ENCODE measurements at regions of chr5 and their contacts with region 1.

Region 1: DNA sequence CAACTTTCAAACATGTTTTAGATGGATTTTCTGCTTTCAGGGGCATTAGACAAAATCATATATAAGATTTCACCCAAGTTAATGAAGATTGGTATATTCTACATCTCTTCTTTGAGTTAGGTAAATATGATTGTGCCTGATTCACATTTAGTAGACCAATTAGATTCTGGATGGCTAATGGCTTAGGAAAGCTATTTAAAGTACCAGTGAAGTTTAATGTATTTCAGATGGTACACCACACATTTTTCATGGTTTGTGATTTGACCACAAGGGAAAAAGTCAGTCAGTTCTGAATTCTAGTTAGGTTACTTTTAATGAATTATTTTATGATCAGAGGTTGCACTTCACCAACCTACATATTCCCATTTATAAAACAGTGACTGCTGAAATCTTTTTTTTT is 409.7 kb downstream of the ADGRV1 start:
- DNase-seq: no peak
- H3K4me3 Mint-ChIP-seq: no peak overlapping the region
- H3K27ac Mint-ChIP-seq: peak overlapping the region; percentile 63
- H3K4me1 Mint-ChIP-seq: peaks cover 33% of the 10 kb centered on the region
- H3K27me3 Mint-ChIP-seq: no peaks in the 10 kb centered on the region

Region 2: DNA sequence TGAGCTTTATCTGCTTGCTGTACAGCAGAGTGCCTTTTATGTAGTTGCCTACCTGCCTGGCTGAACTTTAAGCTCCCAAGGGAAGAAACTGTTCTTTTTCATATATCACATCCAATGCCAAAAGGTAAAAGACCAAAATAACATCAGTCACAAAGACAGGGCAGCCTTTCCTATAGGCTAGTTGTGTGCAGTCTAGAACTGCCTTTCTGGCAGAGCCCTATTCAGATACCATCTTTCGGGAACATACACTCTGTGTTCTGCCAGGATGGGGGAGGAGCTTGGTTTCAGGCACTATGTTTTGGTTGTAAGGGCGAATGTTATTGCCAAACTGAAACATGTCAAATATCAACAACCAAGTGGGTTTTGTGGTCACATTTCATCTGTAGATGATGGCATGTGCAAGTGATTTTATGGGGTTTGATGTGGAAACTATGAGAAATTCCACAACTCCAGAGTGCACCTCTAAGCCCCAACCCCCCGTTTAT is 95.2 kb before region 1 on chr5:
- intact Hi-C with region 1: loop called (anchors 1 kb)
- DNase-seq: no peak
- H3K4me3 Mint-ChIP-seq: no peak overlapping the region
- H3K27ac Mint-ChIP-seq: peak overlapping the region; percentile 18
- H3K4me1 Mint-ChIP-seq: peaks cover 39% of the 10 kb centered on the region
- H3K27me3 Mint-ChIP-seq: peaks cover 35% of the 10 kb centered on the region

Region 3: GRCh38 chr5:90956511-90957097 is 11.7 kb before region 1 on chr5:
- intact Hi-C with region 1: loop called (anchors 1 kb)
- DNase-seq: no peak
- H3K4me3 Mint-ChIP-seq: peak overlapping the region; percentile 1
- H3K27ac Mint-ChIP-seq: peak overlapping the region; percentile 91
- H3K4me1 Mint-ChIP-seq: peaks cover 22% of the 10 kb centered on the region
- H3K27me3 Mint-ChIP-seq: no peaks in the 10 kb centered on the region

Region 4: DNA sequence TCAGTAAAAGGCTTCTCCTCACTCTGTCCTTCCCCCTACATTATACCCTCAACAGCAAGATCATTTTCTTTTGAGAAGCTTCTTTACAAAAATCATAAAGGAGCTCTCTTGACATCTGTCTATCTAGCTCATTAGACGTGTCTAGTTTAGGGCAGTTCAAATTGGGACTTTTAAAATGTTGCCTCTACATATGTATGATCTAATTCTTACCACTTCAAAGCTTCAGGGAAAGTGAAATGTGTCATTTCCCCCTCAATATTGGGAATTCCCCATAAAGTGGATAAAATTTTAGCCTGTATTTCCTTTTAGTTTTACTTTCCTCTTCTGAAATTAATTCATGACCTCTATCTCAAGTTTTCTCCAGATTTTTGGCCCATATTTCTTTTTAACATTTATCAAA is 91.1 kb after region 1 on chr5:
- intact Hi-C with region 1: loop called (anchors 2 kb)
- DNase-seq: no peak
- H3K4me3 Mint-ChIP-seq: no peak overlapping the region
- H3K27ac Mint-ChIP-seq: no peak overlapping the region
- H3K4me1 Mint-ChIP-seq: peaks cover 16% of the 10 kb centered on the region
- H3K27me3 Mint-ChIP-seq: peaks cover 26% of the 10 kb centered on the region

Region 5: DNA sequence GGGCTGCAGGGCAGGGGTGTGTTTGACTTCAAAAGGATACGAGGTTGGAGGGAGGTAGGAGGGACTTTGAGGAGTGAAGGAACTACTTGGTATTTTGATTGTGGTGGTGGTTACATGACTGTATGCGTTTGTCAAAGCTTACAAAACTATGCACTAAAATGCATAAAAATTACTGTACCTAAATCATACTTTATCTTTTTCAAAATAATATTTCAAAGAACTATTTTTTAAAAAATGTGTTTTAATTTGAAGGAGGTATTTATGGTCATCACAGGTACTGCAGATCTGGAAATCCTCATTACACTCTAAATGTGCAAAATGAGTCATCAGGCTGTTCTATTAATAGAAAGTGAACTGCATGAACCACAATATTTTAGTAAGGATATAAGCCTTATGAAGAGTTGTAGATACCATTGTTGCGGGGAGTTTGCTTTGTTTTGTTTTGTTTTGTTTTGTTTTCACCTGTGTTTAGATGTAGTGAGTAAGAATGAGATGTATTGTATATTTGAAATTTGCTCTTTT is 297.9 kb after region 1 on chr5:
- intact Hi-C with region 1: loop called (anchors 5 kb)
- DNase-seq: no peak
- H3K4me3 Mint-ChIP-seq: no peak overlapping the region
- H3K27ac Mint-ChIP-seq: no peak overlapping the region
- H3K4me1 Mint-ChIP-seq: peaks cover 25% of the 10 kb centered on the region
- H3K27me3 Mint-ChIP-seq: peaks cover 2% of the 10 kb centered on the region

Measured in activated T-helper 2 cell treated with anti-CD3 and anti-CD28 coated beads, Interferon-gamma antibody, Interleukin-2, Interleukin-4, amounts not matched to agents 10 μg/mL and 5 μg/mL and 100 μg/mL, durations not matched to agents 14 hours and 24 hours and 36 hours (primary cell).